Left lung (tissue), 14 donors: ENCODE measurements at regions of chr20 and their contacts with region 1.

Region 1: GRCh38 chr20:12201289-12201991 is 283.7 kb downstream of the BTBD3 start:
- DNase-seq: no peak
- ATAC-seq: peak; percentile 41
- H3K4me3 ChIP-seq: no peak overlapping the region
- H3K27ac ChIP-seq: no peak overlapping the region
- H3K4me1 ChIP-seq: no peaks in the 10 kb centered on the region
- H3K27me3 ChIP-seq: no peaks in the 10 kb centered on the region
- CTCF ChIP-seq: no peak

Region 2: GRCh38 chr20:11682285-11682684 is 519.2 kb before region 1 on chr20:
- intact Hi-C with region 1: loop called in 1 of 2 experiments (anchors 5 kb)
- DNase-seq: no peak
- ATAC-seq: no peak
- H3K4me3 ChIP-seq: no peak overlapping the region
- H3K27ac ChIP-seq: no peak overlapping the region
- H3K4me1 ChIP-seq: peaks cover 0 to 6% of the 10 kb centered on the region in 2 donors
- H3K27me3 ChIP-seq: peaks cover 0 to 19% of the 10 kb centered on the region in 2 donors
- CTCF ChIP-seq: no peak

Region 3: DNA sequence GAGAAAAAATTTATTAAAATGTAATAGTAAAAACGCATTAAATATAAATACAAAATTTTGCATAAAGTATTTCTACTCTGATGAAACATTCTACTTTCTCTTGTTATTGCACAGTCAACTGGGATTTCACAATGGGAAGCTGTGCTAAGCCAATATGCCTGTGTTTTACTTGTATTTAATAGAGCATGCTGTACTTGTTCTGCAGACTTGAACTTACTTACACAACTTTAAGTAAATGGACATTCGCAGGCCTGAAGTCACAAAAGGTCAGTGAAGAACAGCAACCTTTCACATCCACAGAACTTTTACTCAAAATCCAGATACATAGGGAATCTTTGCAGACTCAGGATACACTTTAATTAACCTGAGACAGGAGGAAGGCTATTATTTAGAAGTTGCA is 125.8 kb after region 1 on chr20:
- intact Hi-C with region 1: no loop called
- DNase-seq: no peak
- ATAC-seq: no peak
- H3K4me3 ChIP-seq: no peak overlapping the region
- H3K27ac ChIP-seq: no peak overlapping the region
- H3K4me1 ChIP-seq: no peaks in the 10 kb centered on the region
- H3K27me3 ChIP-seq: no peaks in the 10 kb centered on the region
- CTCF ChIP-seq: no peak